CD4-positive, alpha-beta T cell (primary cell): ENCODE measurements at regions of chr9 and their contacts with region 1.

Region 1: GRCh38 chr9:14353222-14354056 is 39.5 kb upstream of the NFIB start:
- DNase-seq: peak; percentile 27 to 76 (median 56)
- ATAC-seq: no peak
- H3K4me3 ChIP-seq: no peak overlapping the region
- H3K4me3 Mint-ChIP-seq: no peak overlapping the region
- H3K27ac ChIP-seq: no peak overlapping the region
- H3K27ac Mint-ChIP-seq: no peak overlapping the region
- H3K4me1 ChIP-seq: peaks cover 3% of the 10 kb centered on the region
- H3K4me1 Mint-ChIP-seq: no peaks in the 10 kb centered on the region
- H3K27me3 ChIP-seq: peaks cover 28 to 65% of the 10 kb centered on the region in 2 experiments
- H3K27me3 Mint-ChIP-seq: peaks cover 76% of the 10 kb centered on the region
- CTCF ChIP-seq: peak; percentile 57

Region 2: DNA sequence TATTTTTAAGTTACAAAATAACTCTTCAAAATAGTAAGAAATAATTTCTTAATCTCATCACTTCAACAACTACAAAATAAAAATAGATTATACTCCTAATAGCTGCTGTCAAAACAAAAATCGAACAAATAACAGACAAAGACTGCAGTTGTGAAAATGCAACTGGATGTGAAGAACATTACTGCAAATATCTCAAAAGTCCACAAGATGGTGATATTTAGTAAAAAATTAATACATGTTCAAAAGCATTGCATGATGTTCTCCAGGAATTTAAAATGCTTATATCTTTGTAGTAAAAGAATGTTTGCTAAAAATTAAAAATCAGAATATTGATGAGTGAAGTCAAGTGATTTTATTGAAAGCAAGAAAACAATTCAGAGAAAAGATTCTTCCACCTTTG is 1140.1 kb before region 1 on chr9:
- CTCF ChIA-PET with region 1: no interaction called
- POLR2A ChIA-PET with region 1: no interaction called
- intact Hi-C with region 1: loop called in 1 of 2 experiments (anchors 10 kb)
- DNase-seq: no peak
- ATAC-seq: no peak
- H3K4me3 ChIP-seq: no peak overlapping the region
- H3K4me3 Mint-ChIP-seq: no peak overlapping the region
- H3K27ac ChIP-seq: no peak overlapping the region
- H3K27ac Mint-ChIP-seq: no peak overlapping the region
- H3K4me1 ChIP-seq: no peaks in the 10 kb centered on the region
- H3K4me1 Mint-ChIP-seq: no peaks in the 10 kb centered on the region
- H3K27me3 ChIP-seq: no peaks in the 10 kb centered on the region
- H3K27me3 Mint-ChIP-seq: no peaks in the 10 kb centered on the region
- CTCF ChIP-seq: no peak

Region 3: DNA sequence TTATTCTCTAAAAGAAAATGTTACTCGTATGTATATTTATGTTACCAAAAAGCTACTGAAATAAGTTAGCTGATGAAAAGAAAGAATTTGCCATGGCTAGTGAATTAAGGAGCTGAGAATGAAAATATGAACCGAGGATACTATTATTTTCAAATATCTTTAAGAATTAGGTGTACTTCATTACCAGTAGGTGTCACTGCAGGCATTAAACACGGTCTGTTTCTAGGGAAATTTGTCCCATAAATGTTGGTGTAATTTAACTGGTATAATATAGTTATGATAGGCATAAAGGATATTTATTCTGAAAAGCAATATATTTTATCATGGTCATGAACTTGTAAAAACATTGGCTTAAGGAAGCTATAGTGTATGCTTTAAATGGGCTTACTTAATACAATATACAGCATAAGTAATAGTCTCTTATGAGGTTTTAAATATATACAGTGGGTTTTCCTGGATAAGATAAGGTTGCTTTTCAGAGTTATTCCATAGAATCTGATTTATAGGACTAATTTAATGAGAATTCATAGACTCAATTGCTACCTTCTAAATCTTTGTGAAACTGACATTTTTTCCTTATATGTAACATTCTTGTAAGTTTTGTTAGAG is 1001.6 kb before region 1 on chr9:
- CTCF ChIA-PET with region 1: no interaction called
- POLR2A ChIA-PET with region 1: no interaction called
- intact Hi-C with region 1: loop called (anchors 5 to 10 kb)
- DNase-seq: peak in 1 of 14 experiments; percentile 1
- ATAC-seq: no peak
- H3K4me3 ChIP-seq: no peak overlapping the region
- H3K4me3 Mint-ChIP-seq: no peak overlapping the region
- H3K27ac ChIP-seq: no peak overlapping the region
- H3K27ac Mint-ChIP-seq: no peak overlapping the region
- H3K4me1 ChIP-seq: no peaks in the 10 kb centered on the region
- H3K4me1 Mint-ChIP-seq: no peaks in the 10 kb centered on the region
- H3K27me3 ChIP-seq: no peaks in the 10 kb centered on the region
- H3K27me3 Mint-ChIP-seq: no peaks in the 10 kb centered on the region
- CTCF ChIP-seq: no peak

Region 4: DNA sequence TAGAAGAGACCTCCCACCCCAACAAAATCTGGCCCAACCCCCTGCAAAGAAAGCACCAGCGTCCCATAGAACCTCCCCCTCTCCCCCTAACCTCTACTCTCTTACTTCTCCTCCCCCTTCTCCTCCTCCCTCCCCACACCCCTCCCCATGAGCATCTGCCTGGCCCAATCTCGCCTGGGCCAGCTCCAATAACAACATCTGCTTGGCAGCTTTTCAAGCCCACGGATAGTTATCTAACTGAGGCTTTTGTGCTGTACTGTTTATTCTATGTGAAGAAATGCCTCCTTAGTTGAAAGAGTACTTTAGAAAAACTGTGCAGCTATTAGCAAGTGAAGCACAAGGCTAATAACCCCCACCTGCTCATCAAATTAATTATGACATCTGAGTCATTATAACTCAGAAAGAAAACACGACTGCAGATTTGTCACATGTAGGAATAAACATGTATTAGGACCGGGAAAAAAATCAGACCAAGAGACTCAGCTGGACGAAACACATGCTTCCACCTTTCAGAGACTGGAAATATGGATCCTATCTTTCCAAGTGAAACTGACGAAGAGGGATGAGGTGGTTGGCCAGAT is 82.3 kb before region 1 on chr9:
- CTCF ChIA-PET with region 1: no interaction called
- POLR2A ChIA-PET with region 1: no interaction called
- intact Hi-C with region 1: no loop called
- DNase-seq: no peak
- ATAC-seq: no peak
- H3K4me3 ChIP-seq: no peak overlapping the region
- H3K4me3 Mint-ChIP-seq: no peak overlapping the region
- H3K27ac ChIP-seq: no peak overlapping the region
- H3K27ac Mint-ChIP-seq: no peak overlapping the region
- H3K4me1 ChIP-seq: no peaks in the 10 kb centered on the region
- H3K4me1 Mint-ChIP-seq: peaks cover 7% of the 10 kb centered on the region
- H3K27me3 ChIP-seq: peaks cover 0 to 5% of the 10 kb centered on the region in 2 experiments
- H3K27me3 Mint-ChIP-seq: peaks cover 53% of the 10 kb centered on the region
- CTCF ChIP-seq: no peak

Region 5: DNA sequence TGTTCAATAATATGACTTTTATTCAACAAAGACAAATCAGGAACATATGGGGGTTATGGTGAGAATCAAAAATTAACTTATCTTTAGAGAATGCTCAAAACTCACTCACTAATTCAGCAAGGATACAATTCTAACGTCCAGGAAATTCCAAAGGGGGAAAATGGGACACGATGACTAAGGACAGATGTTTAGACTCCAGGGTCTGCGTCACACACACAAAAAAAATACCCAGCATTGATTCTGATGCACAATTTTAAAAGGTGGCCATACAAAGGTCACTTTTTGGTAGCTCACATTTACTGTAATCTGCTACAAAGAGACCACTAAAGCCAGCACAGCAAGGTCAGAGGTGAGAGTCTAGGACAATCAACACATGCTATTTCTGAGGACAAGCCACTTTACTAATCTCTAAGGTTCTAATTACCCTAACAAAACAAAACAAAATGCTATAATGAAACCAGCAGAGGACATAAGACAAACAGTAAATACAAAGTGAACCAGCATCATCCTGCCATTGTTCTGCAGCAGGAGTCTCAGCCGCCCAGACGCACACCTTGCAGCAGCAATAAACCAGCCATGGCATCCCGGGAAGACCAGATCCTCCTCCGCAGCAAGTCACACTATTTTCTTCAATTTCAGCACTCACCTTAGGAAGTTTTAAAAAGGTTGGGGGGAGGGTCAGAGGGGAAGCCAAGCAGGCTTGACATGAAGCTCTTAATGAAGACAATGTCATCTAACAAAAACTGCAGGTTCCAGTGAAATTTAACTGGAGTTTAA is 895.8 kb after region 1 on chr9:
- CTCF ChIA-PET with region 1: no interaction called
- POLR2A ChIA-PET with region 1: no interaction called
- intact Hi-C with region 1: no loop called
- DNase-seq: no peak
- ATAC-seq: no peak
- H3K4me3 ChIP-seq: no peak overlapping the region
- H3K4me3 Mint-ChIP-seq: no peak overlapping the region
- H3K27ac ChIP-seq: no peak overlapping the region
- H3K27ac Mint-ChIP-seq: peak overlapping the region; percentile 38
- H3K4me1 ChIP-seq: peaks cover 11% of the 10 kb centered on the region
- H3K4me1 Mint-ChIP-seq: peaks cover 77% of the 10 kb centered on the region
- H3K27me3 ChIP-seq: no peaks in the 10 kb centered on the region
- H3K27me3 Mint-ChIP-seq: no peaks in the 10 kb centered on the region
- CTCF ChIP-seq: no peak